ENCODE measurements at regions of chr12 and their contacts with region 1.

Region 1: GRCh38 chr12:110100315-110100970 is 23.7 kb upstream of the IFT81 start:
- DNase-seq: no peak
- H3K4me3 ChIP-seq: no peak overlapping the region
- CTCF ChIP-seq: peak; percentile 85

Region 2: GRCh38 chr12:109920261-109920780 is 180.1 kb before region 1 on chr12:
- CTCF ChIA-PET with region 1: no interaction called
- POLR2A ChIA-PET with region 1: no interaction called
- DNase-seq: no peak
- H3K4me3 ChIP-seq: no peak overlapping the region
- CTCF ChIP-seq: peak; percentile 9

Region 3: DNA sequence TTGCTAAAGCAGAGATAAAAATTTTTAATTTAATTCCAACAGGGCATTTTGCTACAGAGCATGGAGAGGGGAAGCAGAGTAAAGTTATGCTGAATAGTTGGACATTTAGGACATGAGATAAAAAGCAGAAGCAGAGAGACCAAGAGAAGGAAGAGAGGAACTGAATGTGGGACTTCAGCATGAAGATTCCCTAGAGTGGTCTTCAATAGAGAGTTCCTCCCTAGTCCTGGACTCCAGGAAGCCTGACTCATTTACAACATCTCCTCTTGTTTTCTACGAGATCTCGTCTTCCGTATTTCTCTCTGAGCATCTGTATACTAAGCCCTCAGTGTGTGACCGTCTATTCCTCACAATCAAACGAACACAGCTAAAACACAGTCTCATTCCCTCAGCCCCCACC is 11.5 kb before region 1 on chr12:
- CTCF ChIA-PET with region 1: interaction called, 14 read pairs
- POLR2A ChIA-PET with region 1: no interaction called
- DNase-seq: no peak
- H3K4me3 ChIP-seq: no peak overlapping the region
- CTCF ChIP-seq: no peak

Region 4: GRCh38 chr12:110149086-110149660 is 48.7 kb after region 1 on chr12:
- CTCF ChIA-PET with region 1: no interaction called
- POLR2A ChIA-PET with region 1: no interaction called
- DNase-seq: no peak
- H3K4me3 ChIP-seq: no peak overlapping the region
- CTCF ChIP-seq: no peak

Region 5: GRCh38 chr12:110224379-110225304 is 124.2 kb after region 1 on chr12:
- CTCF ChIA-PET with region 1: interaction called, 36 read pairs
- POLR2A ChIA-PET with region 1: no interaction called
- DNase-seq: peak; percentile 54
- H3K4me3 ChIP-seq: no peak overlapping the region
- CTCF ChIP-seq: peak; percentile 69

Region 6: GRCh38 chr12:110270125-110270962 is 169.9 kb after region 1 on chr12:
- CTCF ChIA-PET with region 1: interaction called, 10 read pairs
- POLR2A ChIA-PET with region 1: no interaction called
- DNase-seq: no peak
- H3K4me3 ChIP-seq: no peak overlapping the region
- CTCF ChIP-seq: no peak

Region 7: GRCh38 chr12:110280779-110281548 is 180.5 kb after region 1 on chr12 and contains the start of gene ATP2A2:
- CTCF ChIA-PET with region 1: interaction called, 10 read pairs
- POLR2A ChIA-PET with region 1: no interaction called
- DNase-seq: no peak
- H3K4me3 ChIP-seq: peak within 1 kb of the TSS; percentile 95
- CTCF ChIP-seq: no peak

Region 8: GRCh38 chr12:110330544-110330943 is 230.1 kb after region 1 on chr12:
- CTCF ChIA-PET with region 1: interaction called, 16 read pairs
- POLR2A ChIA-PET with region 1: no interaction called
- DNase-seq: peak; percentile 17
- H3K4me3 ChIP-seq: no peak overlapping the region
- CTCF ChIP-seq: no peak

Region 9: GRCh38 chr12:110449799-110450497 is 349.5 kb after region 1 on chr12 and contains the start of gene ARPC3:
- CTCF ChIA-PET with region 1: interaction called, 10 read pairs
- POLR2A ChIA-PET with region 1: no interaction called
- DNase-seq: peak; percentile 42
- H3K4me3 ChIP-seq: peak within 1 kb of the TSS; percentile 95
- CTCF ChIP-seq: peak; percentile 92